T-cell (primary cell): ENCODE measurements at regions of chr13 and their contacts with region 1.

Region 1: GRCh38 chr13:97946951-97947588 is 6.4 kb upstream of the IPO5 start:
- DNase-seq: no peak
- ATAC-seq: no peak
- H3K4me3 ChIP-seq: no peak overlapping the region
- H3K4me3 Mint-ChIP-seq: no peak overlapping the region
- H3K27ac ChIP-seq: no peak overlapping the region
- H3K27ac Mint-ChIP-seq: no peak overlapping the region
- H3K4me1 ChIP-seq: no peaks in the 10 kb centered on the region
- H3K4me1 Mint-ChIP-seq: no peaks in the 10 kb centered on the region
- H3K27me3 ChIP-seq: peaks cover 0 to 9% of the 10 kb centered on the region in 2 experiments
- H3K27me3 Mint-ChIP-seq: peaks cover 0 to 4% of the 10 kb centered on the region in 2 donors

Region 2: DNA sequence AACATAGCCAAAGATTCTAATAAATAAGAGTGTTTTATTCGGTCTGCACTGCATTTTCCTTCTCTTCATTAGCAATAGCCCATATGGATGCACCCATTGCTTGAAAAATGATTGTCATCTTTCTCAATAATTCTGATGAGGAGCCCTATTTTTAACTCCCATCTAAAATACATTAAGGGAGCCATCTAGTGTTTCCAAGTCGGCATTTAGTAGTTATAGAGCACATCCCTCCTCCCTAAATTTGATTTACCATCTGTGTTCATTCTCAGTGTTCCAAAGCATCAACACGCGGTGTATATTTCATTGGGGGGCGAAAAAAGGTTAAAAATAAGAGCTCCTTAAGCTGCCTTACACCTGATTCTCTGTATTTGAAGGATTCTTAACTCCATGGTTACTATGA is 112.8 kb before region 1 on chr13:
- CTCF ChIA-PET with region 1: no interaction called
- POLR2A ChIA-PET with region 1: no interaction called
- DNase-seq: no peak
- ATAC-seq: no peak
- H3K4me3 ChIP-seq: no peak overlapping the region
- H3K4me3 Mint-ChIP-seq: no peak overlapping the region
- H3K27ac ChIP-seq: no peak overlapping the region
- H3K27ac Mint-ChIP-seq: no peak overlapping the region
- H3K4me1 ChIP-seq: no peaks in the 10 kb centered on the region
- H3K4me1 Mint-ChIP-seq: no peaks in the 10 kb centered on the region
- H3K27me3 ChIP-seq: no peaks in the 10 kb centered on the region
- H3K27me3 Mint-ChIP-seq: peaks cover 0 to 8% of the 10 kb centered on the region in 2 donors

Region 3: GRCh38 chr13:97889803-97890202 is 57.3 kb before region 1 on chr13:
- CTCF ChIA-PET with region 1: no interaction called
- POLR2A ChIA-PET with region 1: interaction called in 1 of 2 experiments, 10 read pairs
- DNase-seq: no peak
- ATAC-seq: no peak
- H3K4me3 ChIP-seq: no peak overlapping the region
- H3K4me3 Mint-ChIP-seq: no peak overlapping the region
- H3K27ac ChIP-seq: no peak overlapping the region
- H3K27ac Mint-ChIP-seq: no peak overlapping the region
- H3K4me1 ChIP-seq: no peaks in the 10 kb centered on the region
- H3K4me1 Mint-ChIP-seq: no peaks in the 10 kb centered on the region
- H3K27me3 ChIP-seq: peaks cover 0 to 14% of the 10 kb centered on the region in 2 experiments
- H3K27me3 Mint-ChIP-seq: peaks cover 10 to 22% of the 10 kb centered on the region in 2 donors

Region 4: GRCh38 chr13:97912129-97912515 is 34.9 kb before region 1 on chr13:
- CTCF ChIA-PET with region 1: no interaction called
- POLR2A ChIA-PET with region 1: interaction called in 1 of 2 experiments, 10 read pairs
- DNase-seq: no peak
- ATAC-seq: no peak
- H3K4me3 ChIP-seq: no peak overlapping the region
- H3K4me3 Mint-ChIP-seq: no peak overlapping the region
- H3K27ac ChIP-seq: no peak overlapping the region
- H3K27ac Mint-ChIP-seq: no peak overlapping the region
- H3K4me1 ChIP-seq: no peaks in the 10 kb centered on the region
- H3K4me1 Mint-ChIP-seq: no peaks in the 10 kb centered on the region
- H3K27me3 ChIP-seq: peaks cover 0 to 3% of the 10 kb centered on the region in 2 experiments
- H3K27me3 Mint-ChIP-seq: peaks cover 10 to 34% of the 10 kb centered on the region in 2 donors